Posterior cingulate gyrus (tissue), 11 donors: ENCODE measurements at regions of chr11 and their contacts with region 1.

Region 1: DNA sequence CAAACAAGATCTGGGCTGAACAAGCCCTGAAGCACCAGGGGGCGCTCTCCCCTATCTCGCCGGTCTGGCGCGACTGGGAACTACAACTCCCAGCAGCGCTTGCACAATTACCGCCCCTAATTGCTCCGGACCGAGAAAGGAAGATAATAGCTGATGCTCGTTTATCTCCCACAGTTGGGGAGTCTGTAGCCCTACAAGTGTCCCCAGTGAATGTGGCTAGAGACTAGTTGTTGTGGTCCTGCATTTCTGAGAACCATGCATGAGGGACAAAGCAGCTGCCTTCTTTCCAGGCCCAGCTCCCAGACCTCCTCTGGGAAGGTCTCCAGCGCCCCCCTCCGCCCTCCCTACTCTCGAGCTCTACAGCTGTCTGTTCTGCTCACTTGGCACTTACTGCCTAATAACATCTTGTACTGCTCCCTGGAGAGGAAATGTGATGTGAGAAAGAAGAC is 34.4 kb downstream of the NRXN2 start:
- DNase-seq: peak; percentile 84 to 98 (median 92)

Region 2: DNA sequence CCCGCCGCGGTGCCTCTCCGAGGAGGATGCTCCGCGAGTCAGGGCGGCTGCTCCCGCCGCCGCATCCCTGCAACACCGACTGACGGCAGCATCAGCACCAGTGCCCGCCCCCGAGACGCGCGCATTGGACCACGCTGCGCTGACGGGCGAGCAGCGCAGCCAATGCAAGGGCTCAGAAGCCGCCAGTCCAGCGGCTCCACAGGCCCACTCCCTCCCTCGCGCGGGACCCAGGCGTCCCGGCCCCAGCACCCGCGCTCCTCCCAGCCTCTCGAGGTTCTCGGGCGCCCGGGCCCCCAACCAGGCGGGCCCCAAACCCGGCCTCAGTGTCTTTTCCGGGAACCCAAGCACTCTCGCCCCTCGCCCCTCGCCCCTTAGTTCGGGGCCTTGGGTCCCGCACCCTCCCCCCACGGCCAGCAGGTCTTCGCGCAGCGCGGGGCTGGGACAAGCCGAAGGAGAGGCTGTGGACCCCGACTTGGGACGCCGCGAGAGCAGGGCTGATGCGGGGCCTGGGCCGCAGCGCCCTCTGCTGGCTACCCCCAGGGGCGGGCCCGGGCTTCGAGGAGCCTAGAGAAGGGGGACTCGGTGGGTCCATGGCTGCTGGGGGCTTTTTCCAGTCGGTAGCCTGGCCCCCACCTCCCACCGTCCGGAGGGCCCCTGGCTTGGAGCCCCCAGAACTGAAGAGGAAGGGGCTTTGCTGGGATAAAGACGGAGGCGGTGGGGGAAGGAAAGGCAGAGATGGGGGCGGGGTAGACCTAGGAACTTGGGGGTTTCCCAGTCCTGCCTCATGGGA is 34.8 kb after region 1 on chr11 and contains the start of gene NRXN2:
- intact Hi-C with region 1: loop called (anchors 1 kb)
- DNase-seq: peak; percentile 91 to 100 (median 96)

Region 3: GRCh38 chr11:64778508-64779346 is 90.2 kb after region 1 on chr11 and contains the start of gene SF1:
- intact Hi-C with region 1: loop called (anchors 5 kb)
- DNase-seq: peak; percentile 99 to 100 (median 100)

Region 4: DNA sequence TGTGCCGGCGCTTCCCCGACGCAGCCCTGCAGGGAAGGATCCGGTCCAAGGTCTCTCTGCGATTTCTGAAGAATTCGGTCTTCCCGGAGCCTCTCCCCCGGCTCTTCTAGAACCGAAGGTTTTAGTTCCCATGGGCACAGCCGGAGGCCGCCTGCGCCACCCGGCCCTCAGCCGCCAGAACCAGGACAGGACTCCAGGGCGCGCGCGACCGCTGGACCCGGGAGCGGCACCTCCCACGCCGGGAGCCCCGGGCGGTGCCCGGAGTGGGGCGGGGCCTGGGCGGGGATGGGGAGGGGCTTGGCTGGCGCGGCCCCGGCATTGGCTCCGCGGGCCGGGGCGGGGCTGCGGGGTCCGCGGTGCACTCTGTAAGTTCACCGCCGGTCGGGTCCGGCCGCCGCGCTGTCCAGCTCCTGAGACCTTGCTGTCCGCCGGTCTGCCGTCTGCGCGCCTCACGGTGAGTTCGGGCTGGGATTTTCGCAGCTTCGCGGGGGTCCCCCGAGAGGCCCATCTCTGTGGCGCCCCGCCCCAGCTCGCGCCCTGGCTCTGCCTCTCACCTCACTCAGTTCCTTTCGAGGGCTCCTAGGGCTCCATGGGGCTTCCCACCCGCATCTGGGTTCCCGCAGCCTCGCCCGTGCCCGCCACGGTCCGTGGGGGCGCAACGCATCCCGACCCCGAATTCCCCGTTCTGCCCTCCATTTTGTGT is 626.1 kb after region 1 on chr11 and contains the start of gene CDC42EP2:
- intact Hi-C with region 1: no loop called
- DNase-seq: peak; percentile 76 to 98 (median 85)